Activated CD8-positive, alpha-beta memory T cell treated with anti-CD3 and anti-CD28 coated beads, Interleukin-2, amount 10 ng/mL, durations not matched to agents 7 days and 5 days (primary cell): ENCODE measurements at regions of chr10 and their contacts with region 1.

Region 1: GRCh38 chr10:100518761-100519241 is 860 bp downstream of the SEC31B start:
- DNase-seq: peak; percentile 75
- ATAC-seq: peak; percentile 84
- H3K4me3 Mint-ChIP-seq: no peak overlapping the region
- H3K27ac Mint-ChIP-seq: peak overlapping the region; percentile 45
- H3K4me1 Mint-ChIP-seq: peaks cover 33% of the 10 kb centered on the region
- H3K27me3 Mint-ChIP-seq: no peaks in the 10 kb centered on the region

Region 2: DNA sequence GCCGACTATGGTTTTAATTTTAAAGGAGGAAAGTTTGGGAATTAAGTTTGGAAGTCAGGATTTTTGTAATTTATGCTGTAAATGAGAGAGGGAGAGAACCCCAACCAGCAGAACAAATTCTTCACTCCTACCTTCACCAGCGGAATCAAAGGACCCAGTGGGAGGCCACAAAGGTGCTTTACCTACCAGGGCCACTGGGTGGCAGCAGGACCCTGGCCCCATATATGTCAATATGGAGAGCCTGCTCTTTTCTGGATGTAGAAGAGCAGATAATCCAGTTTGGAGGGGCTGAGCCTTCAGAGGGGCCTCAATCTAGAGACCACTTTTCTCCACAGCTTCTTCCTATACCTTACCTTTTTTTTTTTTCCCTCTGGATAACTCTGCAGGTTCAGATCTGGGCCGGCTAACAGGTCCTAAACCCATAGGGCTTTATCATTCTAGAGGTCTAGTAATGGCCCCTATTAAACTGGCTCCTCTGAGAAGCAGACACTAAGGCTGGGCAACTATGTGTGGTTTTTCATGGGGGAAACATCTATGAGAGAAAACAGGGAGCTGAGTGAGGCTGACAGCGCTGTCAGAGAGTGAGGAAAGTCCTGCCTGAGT is 180.3 kb before region 1 on chr10:
- CTCF ChIA-PET with region 1: interaction called, 55 read pairs
- DNase-seq: peak; percentile 86
- ATAC-seq: peak; percentile 88
- H3K4me3 Mint-ChIP-seq: no peak overlapping the region
- H3K27ac Mint-ChIP-seq: no peak overlapping the region
- H3K4me1 Mint-ChIP-seq: peaks cover 3% of the 10 kb centered on the region
- H3K27me3 Mint-ChIP-seq: peaks cover 16% of the 10 kb centered on the region

Region 3: GRCh38 chr10:100433253-100434240 is 85.3 kb before region 1 on chr10:
- CTCF ChIA-PET with region 1: interaction called, 272 read pairs
- DNase-seq: peak; percentile 97
- ATAC-seq: peak; percentile 99
- H3K4me3 Mint-ChIP-seq: no peak overlapping the region
- H3K27ac Mint-ChIP-seq: no peak overlapping the region
- H3K4me1 Mint-ChIP-seq: peaks cover 11% of the 10 kb centered on the region
- H3K27me3 Mint-ChIP-seq: no peaks in the 10 kb centered on the region

Region 4: GRCh38 chr10:100481462-100482081 is 37.2 kb before region 1 on chr10:
- CTCF ChIA-PET with region 1: interaction called, 363 read pairs
- DNase-seq: peak; percentile 94
- ATAC-seq: peak; percentile 94
- H3K4me3 Mint-ChIP-seq: peak overlapping the region; percentile 74
- H3K27ac Mint-ChIP-seq: no peak overlapping the region
- H3K4me1 Mint-ChIP-seq: peaks cover 22% of the 10 kb centered on the region
- H3K27me3 Mint-ChIP-seq: peaks cover 29% of the 10 kb centered on the region

Region 5: DNA sequence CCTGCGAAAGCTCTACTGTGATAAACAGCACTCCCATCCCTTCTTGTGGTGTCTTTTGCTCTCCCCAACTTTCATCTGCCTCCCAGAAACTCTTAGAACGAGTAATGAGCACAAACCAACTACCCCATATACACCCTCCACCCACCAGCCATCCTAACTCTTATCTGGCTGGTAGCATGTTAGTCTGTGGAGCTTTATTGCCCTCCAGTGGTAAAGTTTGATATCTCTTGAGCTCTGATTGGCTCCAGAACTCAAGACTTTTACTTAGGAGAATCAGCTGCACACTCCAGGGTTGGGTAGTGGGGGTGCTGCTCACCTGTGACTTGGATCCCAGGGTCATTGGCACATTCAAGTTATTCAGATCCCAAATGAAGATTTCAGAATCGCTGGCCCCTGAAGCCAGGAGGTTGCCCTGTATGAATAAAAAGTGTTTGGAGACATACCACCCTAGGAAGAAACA is 10.1 kb before region 1 on chr10:
- CTCF ChIA-PET with region 1: interaction called, 88 read pairs
- DNase-seq: peak; percentile 74
- ATAC-seq: peak; percentile 65
- H3K4me3 Mint-ChIP-seq: peak overlapping the region; percentile 74
- H3K27ac Mint-ChIP-seq: peak overlapping the region; percentile 97
- H3K4me1 Mint-ChIP-seq: peaks cover 90% of the 10 kb centered on the region
- H3K27me3 Mint-ChIP-seq: no peaks in the 10 kb centered on the region

Region 6: DNA sequence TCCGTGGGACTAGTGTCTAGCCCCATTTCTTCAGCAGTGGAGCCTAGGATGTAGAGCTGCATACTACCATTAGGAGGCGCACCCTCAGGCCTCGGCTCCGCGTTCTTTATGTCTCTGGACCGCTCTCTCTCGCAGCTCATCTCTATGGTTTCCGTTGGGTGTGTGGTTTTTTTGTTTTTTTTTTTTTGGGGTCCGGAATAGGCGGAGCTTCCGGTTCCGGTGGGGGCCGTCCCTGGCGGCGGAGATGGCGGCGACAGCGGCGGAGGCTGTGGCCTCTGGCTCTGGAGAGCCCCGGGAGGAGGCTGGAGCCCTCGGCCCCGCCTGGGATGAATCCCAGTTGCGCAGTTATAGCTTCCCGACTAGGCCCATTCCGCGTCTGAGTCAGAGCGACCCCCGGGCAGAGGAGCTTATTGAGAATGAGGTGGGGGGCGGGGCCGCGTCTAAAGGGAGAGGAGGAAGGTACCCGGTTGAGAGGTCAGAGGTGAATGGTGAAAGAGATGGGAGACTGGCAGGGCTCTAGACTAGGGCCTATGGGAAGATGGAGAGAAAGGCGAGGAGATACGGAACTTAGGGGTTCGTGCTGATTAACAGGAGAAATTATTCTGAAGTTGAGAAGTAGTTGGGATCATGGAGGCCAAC is 17.0 kb after region 1 on chr10 and contains the start of gene HIF1AN:
- CTCF ChIA-PET with region 1: interaction called, 13 read pairs
- DNase-seq: peak; percentile 94
- ATAC-seq: peak; percentile 98
- H3K4me3 Mint-ChIP-seq: no peak within 1 kb of the TSS
- H3K27ac Mint-ChIP-seq: no peak within 1 kb of the TSS
- H3K4me1 Mint-ChIP-seq: peaks cover 12% of the 10 kb centered on the region
- H3K27me3 Mint-ChIP-seq: no peaks in the 10 kb centered on the region
- total RNA-seq, gene HIF1AN: 49.2 to 53.6 TPM